MCF 10A (cell line): ENCODE measurements at regions of chr16 and their contacts with region 1.

Region 1: GRCh38 chr16:81077076-81077940 is at the start of gene C16orf46:
- DNase-seq: peak; percentile 92
- H3K4me3 Mint-ChIP-seq: no peak within 1 kb of the TSS
- H3K27ac Mint-ChIP-seq: no peak within 1 kb of the TSS
- H3K4me1 Mint-ChIP-seq: no peaks in the 10 kb centered on the region
- H3K27me3 Mint-ChIP-seq: no peaks in the 10 kb centered on the region
- CTCF ChIP-seq: no peak
- total RNA-seq, gene C16orf46: 0.66 and 3.8 TPM in 2 replicates

Region 2: DNA sequence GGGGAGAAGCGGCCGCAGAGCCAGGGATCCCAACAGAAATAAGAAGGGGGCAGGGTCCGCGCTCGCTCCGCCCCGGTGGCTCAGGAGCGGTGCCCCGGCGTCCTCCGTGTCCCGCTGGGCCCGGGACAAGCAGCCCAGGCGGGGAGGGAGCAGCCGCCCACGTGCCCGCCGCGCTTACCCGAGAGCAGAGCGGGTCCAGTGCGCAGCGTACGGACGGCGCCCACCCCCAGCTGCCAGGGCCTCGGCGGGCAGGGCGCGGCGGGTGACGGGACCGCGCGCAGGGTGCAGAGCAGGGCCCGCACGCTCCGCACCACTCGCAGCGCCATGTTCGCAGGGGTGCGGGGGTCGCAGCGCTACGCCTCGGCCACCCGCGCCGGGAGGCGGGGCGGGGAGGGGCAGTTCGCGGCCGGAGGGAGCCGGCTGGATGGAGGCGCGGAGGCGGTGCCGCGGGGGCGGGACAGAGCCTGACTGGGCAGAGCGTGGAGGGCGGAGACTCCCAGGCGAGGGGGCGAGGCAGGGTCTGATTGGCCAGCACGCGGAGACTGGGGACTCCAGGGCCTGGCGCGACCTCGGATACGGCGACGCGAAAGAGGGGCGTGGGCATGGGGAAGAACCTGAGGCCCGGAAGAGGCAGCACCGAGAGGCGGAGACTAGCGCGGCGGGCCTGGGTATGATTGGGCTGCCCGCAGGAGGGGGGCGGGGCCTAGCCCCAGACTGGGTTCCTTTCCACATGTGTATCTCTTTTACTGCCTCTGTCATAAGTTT is 18.8 kb after region 1 on chr16 and contains the start of gene GCSH:
- CTCF ChIA-PET with region 1: interaction called, 3 read pairs
- POLR2A ChIA-PET with region 1: interaction called, 23 read pairs
- intact Hi-C with region 1: loop called (anchors 1 kb)
- DNase-seq: peak; percentile 98
- H3K4me3 Mint-ChIP-seq: peak within 1 kb of the TSS; percentile 63
- H3K27ac Mint-ChIP-seq: peak within 1 kb of the TSS; percentile 64
- H3K4me1 Mint-ChIP-seq: peaks cover 10% of the 10 kb centered on the region
- H3K27me3 Mint-ChIP-seq: no peaks in the 10 kb centered on the region
- CTCF ChIP-seq: no peak
- total RNA-seq, gene GCSH: 68.4 and 70.8 TPM in 2 replicates

Region 3: GRCh38 chr16:81106811-81107503 is 29.6 kb after region 1 on chr16:
- CTCF ChIA-PET with region 1: no interaction called
- POLR2A ChIA-PET with region 1: no interaction called
- intact Hi-C with region 1: no loop called
- DNase-seq: no peak
- H3K4me3 Mint-ChIP-seq: no peak overlapping the region
- H3K27ac Mint-ChIP-seq: no peak overlapping the region
- H3K4me1 Mint-ChIP-seq: no peaks in the 10 kb centered on the region
- H3K27me3 Mint-ChIP-seq: no peaks in the 10 kb centered on the region
- CTCF ChIP-seq: no peak

Region 4: DNA sequence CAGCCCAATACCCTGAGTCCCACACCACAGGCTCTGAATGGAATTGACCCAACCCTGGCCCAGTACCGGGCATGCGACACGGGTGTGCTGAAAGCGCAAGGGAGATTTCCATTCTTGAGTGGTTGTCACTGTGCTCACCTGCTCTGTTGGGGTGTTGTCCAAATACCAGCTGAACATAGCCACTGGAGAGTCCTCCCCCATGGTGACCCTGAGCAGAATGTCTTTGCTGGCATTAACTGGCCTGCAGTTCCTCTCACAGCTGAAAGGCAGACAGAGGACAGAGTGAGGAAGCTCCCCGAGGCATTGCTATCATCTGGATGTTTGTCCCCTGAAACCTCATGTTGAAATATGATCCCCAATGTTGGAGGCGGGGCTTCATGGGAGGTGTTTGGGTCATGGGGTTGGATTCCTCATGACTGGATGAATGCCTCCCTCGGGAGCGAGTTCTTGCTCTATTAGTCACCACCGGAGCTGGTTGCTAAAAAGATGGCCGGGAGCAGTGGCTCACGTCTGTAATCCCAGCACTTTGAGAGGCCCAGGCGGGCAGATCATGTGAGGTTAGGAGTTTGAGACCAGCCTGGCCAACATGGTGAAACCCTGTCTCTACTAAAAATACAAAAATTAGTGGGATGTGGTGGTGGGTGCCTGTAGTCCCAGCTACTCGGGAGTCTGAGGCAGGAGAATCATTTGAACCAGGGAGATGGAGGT is 103.9 kb after region 1 on chr16:
- CTCF ChIA-PET with region 1: no interaction called
- POLR2A ChIA-PET with region 1: interaction called, 12 read pairs
- intact Hi-C with region 1: no loop called
- DNase-seq: peak; percentile 98
- H3K4me3 Mint-ChIP-seq: peak overlapping the region; percentile 55
- H3K27ac Mint-ChIP-seq: peak overlapping the region; percentile 93
- H3K4me1 Mint-ChIP-seq: peaks cover 13% of the 10 kb centered on the region
- H3K27me3 Mint-ChIP-seq: no peaks in the 10 kb centered on the region
- CTCF ChIP-seq: no peak